Posterior cingulate gyrus (tissue), 11 donors: ENCODE measurements at regions of chr13 and their contacts with region 1.

Region 1: DNA sequence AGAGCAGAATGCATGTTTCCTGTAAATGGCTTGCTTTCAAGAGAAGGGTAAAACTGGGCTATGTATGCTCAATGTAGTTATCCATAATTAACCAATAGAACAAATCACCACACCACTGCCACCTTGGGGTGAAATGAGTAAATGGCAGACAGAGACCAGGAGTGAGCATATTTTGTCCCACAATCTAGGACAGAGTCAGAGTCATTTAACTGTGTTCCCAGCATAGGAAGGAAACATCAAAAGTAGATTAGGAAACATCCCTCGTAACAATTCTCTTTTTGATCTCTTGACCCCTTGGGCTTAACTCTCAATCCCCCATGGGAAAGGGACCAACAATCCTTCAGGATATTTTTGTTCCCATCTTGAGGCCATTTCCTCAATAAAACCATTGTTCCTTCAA is 224.8 kb downstream of the NHLRC3 start:
- DNase-seq: peak in 4 of 10 donors; percentile 33 to 54 (median 45)

Region 2: DNA sequence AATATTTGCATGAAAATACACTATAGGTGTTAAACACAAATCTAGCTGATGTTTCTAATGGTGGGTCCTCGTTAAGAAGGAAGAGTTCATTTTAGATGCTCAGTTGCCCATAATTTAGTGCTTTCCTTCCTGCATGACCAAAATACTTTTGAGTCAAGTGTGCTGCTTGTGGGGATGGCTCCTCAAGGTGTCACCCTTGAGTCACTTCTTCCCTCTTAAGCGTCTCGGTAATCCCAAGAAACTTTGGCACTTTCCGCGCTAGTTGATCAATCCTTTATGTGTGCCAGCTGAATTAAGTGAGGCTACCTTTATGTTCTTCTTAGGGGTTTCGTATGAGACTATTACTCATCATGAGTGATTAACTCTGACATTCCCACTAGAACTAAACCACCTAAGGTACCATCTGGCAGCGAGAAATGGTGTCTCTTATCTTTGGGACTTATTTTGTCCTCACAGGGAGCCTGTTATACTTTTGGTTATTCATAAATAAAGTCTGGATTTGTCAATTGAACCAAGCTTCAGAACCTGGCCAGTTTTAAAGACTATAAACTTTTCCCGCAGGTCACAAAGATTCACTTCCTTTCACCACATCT is 118.0 kb before region 1 on chr13:
- intact Hi-C with region 1: loop called (anchors 10 kb)
- DNase-seq: peak in 9 of 10 donors; percentile 19 to 88 (median 61)

Region 3: DNA sequence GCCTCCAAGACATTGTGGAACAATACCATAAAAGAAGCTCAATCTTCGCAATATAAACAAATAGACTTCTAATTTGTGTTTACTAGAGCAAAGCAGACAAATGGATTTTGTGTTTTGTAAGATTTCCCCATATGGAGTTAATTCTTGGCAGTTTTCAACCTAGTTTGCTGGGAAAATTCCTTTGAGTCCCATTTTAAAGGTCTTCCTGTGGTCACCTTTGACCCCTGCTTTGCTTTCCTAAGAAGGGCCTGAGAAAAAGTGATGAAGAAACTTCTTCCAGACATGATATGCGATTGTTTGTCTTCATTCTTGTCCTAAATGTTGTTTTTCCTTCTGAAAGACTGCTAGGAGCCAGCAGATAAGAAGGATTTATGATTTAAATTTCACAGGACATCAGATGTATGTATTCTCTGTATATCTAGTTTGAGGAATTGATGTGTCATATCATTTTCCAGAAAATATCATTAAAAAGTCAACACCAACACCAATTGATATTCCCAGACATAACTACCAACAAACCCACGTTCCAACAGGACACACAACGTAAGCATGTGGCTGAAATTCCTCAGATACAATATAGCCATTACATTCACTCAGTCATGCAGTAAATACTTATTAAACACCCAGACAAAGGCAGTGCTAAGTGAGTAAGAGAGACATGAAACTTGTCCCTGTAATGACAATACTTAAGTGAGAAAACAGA is 63.6 kb after region 1 on chr13:
- intact Hi-C with region 1: no loop called
- DNase-seq: no peak